ENCODE measurements at regions of chr10 and their contacts with region 1.

Region 1: GRCh38 chr10:52986125-52986524 is 213.5 kb upstream of the MBL2 start:
- DNase-seq: no peak
- ATAC-seq: no peak
- H3K4me3 ChIP-seq: no peak overlapping the region
- H3K27ac ChIP-seq: no peak overlapping the region
- H3K4me1 ChIP-seq: no peaks in the 10 kb centered on the region
- H3K27me3 ChIP-seq: no peaks in the 10 kb centered on the region
- CTCF ChIP-seq: no peak

Region 2: DNA sequence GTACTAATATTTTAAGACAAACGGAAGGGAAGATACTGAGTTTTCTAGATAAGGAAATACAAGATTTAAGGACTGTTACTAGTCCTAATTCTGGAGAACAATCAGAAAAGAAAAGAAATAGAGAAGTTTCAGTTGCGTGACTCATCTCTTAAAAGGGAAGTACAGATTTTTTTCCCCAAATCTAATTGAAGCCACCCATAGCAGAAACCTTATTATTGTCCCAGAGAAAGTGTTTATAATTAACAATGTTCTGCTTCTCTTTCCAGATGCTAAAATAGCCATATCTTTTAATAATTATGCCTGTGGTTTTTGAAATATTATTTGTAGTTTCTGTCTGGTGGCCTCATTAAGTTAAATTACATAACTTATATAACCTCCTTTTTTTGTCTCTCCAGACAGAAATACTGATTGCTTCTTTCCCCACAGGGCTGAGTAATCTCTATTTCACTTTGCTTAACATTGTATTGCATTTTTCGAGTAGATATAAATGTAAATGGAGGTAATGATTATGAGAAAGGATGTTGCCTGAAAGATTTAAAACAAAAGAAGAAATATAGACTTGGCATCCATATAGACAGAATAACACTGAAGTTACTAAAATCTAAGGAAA is 27.2 kb after region 1 on chr10:
- CTCF ChIA-PET with region 1: no interaction called
- POLR2A ChIA-PET with region 1: interaction called, 4 read pairs
- intact Hi-C with region 1: loop called (anchors 2 kb)
- DNase-seq: no peak
- ATAC-seq: no peak
- H3K4me3 ChIP-seq: no peak overlapping the region
- H3K27ac ChIP-seq: no peak overlapping the region
- H3K4me1 ChIP-seq: no peaks in the 10 kb centered on the region
- H3K27me3 ChIP-seq: no peaks in the 10 kb centered on the region
- CTCF ChIP-seq: no peak

Region 3: GRCh38 chr10:53064614-53065013 is 78.5 kb after region 1 on chr10:
- CTCF ChIA-PET with region 1: no interaction called
- POLR2A ChIA-PET with region 1: no interaction called
- intact Hi-C with region 1: no loop called
- DNase-seq: no peak
- ATAC-seq: no peak
- H3K4me3 ChIP-seq: no peak overlapping the region
- H3K27ac ChIP-seq: no peak overlapping the region
- H3K4me1 ChIP-seq: no peaks in the 10 kb centered on the region
- H3K27me3 ChIP-seq: no peaks in the 10 kb centered on the region
- CTCF ChIP-seq: no peak

Measured in PC-3 (cell line).